ENCODE measurements at regions of chr11 and their contacts with region 1.

Region 1: GRCh38 chr11:122202951-122203456 is 87.0 kb upstream of the BLID start:
- DNase-seq: peak; percentile 88
- ATAC-seq: peak; percentile 87

Region 2: DNA sequence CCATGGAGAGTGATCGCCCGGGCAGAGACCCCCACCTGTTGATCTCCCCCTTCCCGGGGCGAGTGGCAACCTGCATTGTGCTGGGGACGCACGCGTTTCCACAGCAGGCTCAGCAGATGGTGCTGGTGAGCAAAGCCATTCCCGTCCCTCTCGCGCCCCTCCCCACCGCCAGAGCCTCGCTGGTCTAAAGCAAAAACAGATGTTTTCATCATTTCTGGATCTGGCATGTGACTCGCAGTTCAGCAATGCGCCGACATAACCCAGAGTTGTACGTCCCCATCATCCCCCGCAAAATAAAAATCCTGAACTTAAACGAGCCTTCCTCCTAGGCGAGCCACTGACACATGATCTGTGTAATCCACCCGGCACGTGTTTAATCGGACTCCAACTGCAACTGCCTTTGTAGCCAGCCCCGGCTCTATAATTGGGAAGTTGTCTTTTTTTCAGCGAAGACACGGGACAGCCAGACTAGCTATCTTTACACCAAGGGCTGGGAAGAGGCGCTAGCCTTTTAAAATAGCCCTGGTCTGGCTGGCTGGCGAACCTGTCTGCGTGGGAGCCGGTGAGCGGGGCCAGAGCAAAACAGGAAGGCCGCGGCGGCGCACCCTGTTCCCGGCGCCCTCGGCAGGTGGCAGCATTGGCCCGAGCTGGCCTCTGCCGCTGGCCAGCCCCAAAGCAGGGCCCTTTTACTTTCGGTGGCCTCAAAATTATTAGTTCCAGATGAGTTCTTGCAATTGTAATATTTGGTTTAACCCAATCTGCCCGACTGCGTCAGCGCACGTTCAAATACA is 547.3 kb before region 1 on chr11:
- intact Hi-C with region 1: loop called (anchors 5 kb)
- DNase-seq: peak; percentile 93
- ATAC-seq: peak; percentile 95

Region 3: GRCh38 chr11:121672630-121673487 is 530.1 kb before region 1 on chr11:
- intact Hi-C with region 1: no loop called
- DNase-seq: no peak
- ATAC-seq: peak; percentile 54

Region 4: DNA sequence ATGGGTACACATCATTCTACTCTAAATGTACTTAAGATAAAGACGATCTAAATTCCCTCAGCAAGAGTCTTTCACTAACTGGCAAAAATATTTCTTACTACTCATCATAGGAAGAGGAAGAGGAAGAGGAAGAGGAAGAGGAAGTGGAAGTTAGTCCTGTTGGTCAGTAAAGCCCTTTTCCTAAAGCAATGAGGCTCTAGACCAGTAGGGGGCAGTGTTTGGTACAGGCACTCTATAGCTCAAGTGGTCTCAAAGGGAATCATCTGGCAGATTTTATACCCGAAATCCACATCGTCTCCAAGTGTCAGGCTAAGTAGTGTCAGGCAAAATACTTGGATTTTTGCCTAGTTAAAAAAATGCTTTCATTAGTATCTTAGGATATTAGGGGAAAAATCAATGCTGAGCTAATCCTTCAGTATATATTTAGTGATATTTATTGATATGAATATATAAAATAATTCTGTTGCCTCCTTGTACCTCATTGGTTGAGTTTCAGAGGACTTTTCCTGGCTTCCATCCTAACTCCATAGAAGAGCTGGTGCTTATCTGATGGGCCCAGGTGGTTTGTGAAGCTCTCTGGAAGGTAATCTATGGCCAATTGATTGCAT is 94.7 kb before region 1 on chr11:
- intact Hi-C with region 1: loop called (anchors 10 kb)
- DNase-seq: no peak
- ATAC-seq: peak; percentile 55

Measured in sciatic nerve (tissue), 2 donors.